Activated CD4-positive, alpha-beta T cell treated with anti-CD3 and anti-CD28 coated beads for 36 hours (primary cell): ENCODE measurements at regions of chr17 and their contacts with region 1.

Region 1: GRCh38 chr17:81952792-81953228 is 5.8 kb upstream of the MYADML2 start:
- DNase-seq: no peak
- ATAC-seq: no peak
- H3K4me3 Mint-ChIP-seq: no peak overlapping the region
- H3K27ac Mint-ChIP-seq: no peak overlapping the region
- H3K4me1 Mint-ChIP-seq: peaks cover 2% of the 10 kb centered on the region
- H3K27me3 Mint-ChIP-seq: peaks cover 2% of the 10 kb centered on the region

Region 2: DNA sequence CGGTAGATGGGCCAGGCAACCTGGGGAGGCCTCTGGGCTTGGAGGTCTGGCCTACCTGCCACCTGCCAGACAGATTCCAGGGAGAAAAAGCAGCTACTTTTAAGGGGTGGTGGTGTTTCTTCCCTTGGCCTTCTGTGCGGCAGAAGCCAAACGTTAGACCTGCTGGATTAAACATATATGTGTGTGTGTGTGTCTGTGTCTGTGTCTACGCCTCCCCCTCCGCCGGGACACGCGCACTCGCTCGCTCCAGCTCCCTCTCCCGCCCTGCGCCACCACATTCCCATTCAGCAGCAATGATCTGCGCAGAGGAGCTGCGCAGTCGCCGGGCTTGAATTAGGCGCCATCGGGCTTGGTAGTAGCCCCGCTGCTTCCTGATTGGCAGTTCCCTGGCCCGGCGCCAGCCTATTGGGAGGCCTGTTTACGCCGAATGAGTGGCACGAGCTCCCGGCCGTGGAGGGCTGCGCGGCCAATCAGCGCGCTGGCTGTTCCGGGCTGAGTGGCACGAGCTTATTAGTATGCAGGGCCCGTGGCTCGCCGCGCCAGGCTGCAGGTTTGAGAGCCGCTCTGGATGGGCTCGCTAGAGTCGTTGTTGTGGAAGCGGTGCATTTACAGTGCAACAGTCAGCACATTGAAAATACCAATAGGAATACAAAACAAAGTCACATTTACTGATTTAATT is 557.8 kb before region 1 on chr17 and contains the start of gene BAHCC1:
- CTCF ChIA-PET with region 1: no interaction called
- POLR2A ChIA-PET with region 1: no interaction called
- intact Hi-C with region 1: no loop called
- DNase-seq: peak; percentile 97
- ATAC-seq: peak; percentile 92
- H3K4me3 Mint-ChIP-seq: peak within 1 kb of the TSS; percentile 46
- H3K27ac Mint-ChIP-seq: peak within 1 kb of the TSS; percentile 39
- H3K4me1 Mint-ChIP-seq: peaks cover 24% of the 10 kb centered on the region
- H3K27me3 Mint-ChIP-seq: peaks cover 51% of the 10 kb centered on the region
- total RNA-seq, gene BAHCC1: 0.05 TPM in 1 of 2 experiments, not detected in the other

Region 3: DNA sequence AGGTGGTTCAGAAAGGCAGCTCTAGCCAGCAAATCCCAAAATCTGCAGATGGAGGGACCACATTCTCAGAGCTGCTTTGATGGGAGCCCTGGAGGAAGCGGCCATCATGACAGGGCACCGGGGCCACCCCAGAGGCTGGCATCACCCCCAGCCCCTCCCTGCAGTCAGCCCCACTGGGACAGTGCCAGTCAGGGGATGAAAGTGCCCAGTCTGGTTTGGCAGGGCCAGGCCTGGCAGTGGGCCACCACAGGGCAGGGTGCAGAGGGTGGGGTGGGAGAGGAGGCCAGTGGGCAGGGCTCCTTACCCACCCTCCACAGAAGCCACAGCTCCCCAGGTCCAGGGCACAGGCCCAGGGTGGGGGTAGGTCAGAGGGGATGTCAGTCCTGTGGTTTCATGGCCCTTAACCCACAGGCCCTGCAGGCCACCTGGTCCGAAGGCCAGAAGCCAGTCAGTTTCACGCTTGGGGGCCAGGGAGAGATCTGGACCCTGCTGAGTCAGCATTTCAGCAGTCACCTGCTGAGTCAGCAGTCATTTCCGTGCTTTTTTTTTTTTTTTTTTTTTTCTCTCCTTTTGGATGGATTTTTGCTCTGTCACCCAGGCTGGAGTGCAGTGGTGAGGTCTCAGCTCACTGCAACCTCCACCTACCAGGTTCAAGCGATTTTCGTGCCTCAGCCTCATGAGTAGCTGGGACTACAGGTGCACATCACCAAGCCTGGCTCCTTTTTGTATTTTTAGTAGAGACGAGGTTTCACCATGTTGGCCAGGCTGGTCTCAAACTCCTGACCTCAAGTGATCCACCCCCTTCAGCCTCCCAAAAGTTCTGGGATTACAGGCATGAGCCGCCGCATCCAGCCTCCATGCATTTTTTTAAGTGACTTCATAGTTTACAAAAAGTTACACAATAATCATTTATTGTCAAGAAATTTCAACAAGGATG is 230.4 kb before region 1 on chr17:
- CTCF ChIA-PET with region 1: no interaction called
- POLR2A ChIA-PET with region 1: no interaction called
- intact Hi-C with region 1: no loop called
- DNase-seq: no peak
- ATAC-seq: peak; percentile 33
- H3K4me3 Mint-ChIP-seq: no peak overlapping the region
- H3K27ac Mint-ChIP-seq: no peak overlapping the region
- H3K4me1 Mint-ChIP-seq: no peaks in the 10 kb centered on the region
- H3K27me3 Mint-ChIP-seq: peaks cover 9% of the 10 kb centered on the region

Region 4: GRCh38 chr17:81733507-81734404 is 219.1 kb before region 1 on chr17:
- CTCF ChIA-PET with region 1: no interaction called
- POLR2A ChIA-PET with region 1: no interaction called
- intact Hi-C with region 1: loop called in 1 of 2 experiments (anchors 1 kb)
- DNase-seq: peak; percentile 87
- ATAC-seq: peak; percentile 96
- H3K4me3 Mint-ChIP-seq: no peak overlapping the region
- H3K27ac Mint-ChIP-seq: no peak overlapping the region
- H3K4me1 Mint-ChIP-seq: peaks cover 7% of the 10 kb centered on the region
- H3K27me3 Mint-ChIP-seq: peaks cover 16% of the 10 kb centered on the region

Region 5: GRCh38 chr17:82434216-82434565 is 481.4 kb after region 1 on chr17:
- CTCF ChIA-PET with region 1: no interaction called
- POLR2A ChIA-PET with region 1: no interaction called
- intact Hi-C with region 1: no loop called
- DNase-seq: peak; percentile 43
- ATAC-seq: peak; percentile 39
- H3K4me3 Mint-ChIP-seq: no peak overlapping the region
- H3K27ac Mint-ChIP-seq: no peak overlapping the region
- H3K4me1 Mint-ChIP-seq: peaks cover 13% of the 10 kb centered on the region
- H3K27me3 Mint-ChIP-seq: no peaks in the 10 kb centered on the region